ENCODE measurements at regions of chr12 and their contacts with region 1.

Region 1: DNA sequence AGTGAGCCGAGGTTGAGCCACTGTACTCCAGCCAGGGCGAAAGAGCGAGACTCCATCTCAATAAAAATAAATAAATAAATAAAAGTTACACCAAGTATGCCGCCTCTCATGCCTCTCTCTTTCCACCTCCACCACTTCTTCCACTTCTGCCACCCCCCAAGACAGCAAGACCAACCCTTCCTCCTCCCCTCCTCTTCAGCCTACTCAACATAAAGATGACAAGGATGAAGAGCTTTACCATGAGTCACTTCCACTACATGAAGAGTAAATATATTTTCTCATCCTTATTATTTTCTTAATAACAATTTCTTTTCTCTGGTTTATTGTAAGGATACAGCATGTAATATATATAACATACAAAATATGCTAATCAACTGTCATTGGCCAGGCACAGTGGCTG is 3.6 kb upstream of the TMED2 start:
- DNase-seq: no peak
- H3K4me3 Mint-ChIP-seq: no peak overlapping the region
- H3K27ac Mint-ChIP-seq: no peak overlapping the region
- H3K4me1 Mint-ChIP-seq: peaks cover 24% of the 10 kb centered on the region
- H3K27me3 Mint-ChIP-seq: no peaks in the 10 kb centered on the region

Region 2: DNA sequence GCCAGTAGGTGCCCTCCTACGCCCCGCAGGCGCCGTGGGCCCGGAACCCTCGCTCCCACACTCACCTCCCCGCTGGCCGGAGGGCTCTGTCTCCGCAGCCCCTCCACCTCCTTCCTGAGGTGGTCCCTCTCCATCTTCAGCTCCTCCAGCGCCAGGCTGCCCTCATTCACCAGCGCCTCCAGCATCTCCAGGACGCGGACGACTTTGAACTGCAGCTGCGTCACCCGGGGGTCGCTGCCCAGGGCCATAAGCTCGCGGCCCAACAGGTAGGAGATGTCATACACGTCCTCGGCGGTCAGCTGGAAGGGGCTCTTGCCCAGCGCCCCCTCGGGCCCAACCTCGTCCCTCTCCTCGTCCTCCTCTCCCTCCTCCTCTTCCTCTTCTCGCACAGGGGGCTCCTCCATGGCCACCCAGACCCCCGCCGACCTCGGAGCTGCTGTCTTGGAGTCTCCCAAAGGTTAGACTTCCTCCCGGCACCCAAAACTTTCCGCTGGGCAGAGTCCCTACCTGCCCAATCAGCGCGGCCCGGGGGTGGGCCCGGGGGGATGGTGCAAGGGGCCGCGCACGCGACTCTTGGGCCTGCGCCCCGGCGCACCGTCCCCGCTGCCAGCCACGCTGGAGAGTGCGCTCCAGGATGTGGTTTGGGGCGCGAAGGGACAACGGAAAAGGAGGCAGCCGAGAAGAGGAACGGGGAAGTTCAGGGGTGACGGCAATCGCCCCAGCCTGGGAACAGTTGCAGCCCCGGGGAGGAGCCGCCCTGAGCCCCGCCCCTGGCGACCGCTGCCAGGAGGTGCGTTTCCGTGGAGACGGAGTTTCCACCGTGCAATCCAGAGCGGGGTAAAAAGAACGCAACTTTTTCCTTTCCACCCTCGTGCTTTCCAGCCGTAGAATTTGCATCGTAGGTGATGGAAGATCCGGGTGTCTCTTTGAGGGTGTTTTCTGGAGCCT is 144.5 kb before region 1 on chr12 and contains the start of gene RILPL2:
- CTCF ChIA-PET with region 1: no interaction called
- POLR2A ChIA-PET with region 1: interaction called, 14 read pairs
- DNase-seq: peak; percentile 93
- H3K4me3 Mint-ChIP-seq: peak within 1 kb of the TSS; percentile 97
- H3K27ac Mint-ChIP-seq: peak within 1 kb of the TSS; percentile 96
- H3K4me1 Mint-ChIP-seq: peaks cover 49% of the 10 kb centered on the region
- H3K27me3 Mint-ChIP-seq: no peaks in the 10 kb centered on the region
- total RNA-seq, gene RILPL2: 8.9 to 9.0 TPM

Region 3: GRCh38 chr12:123670882-123671728 is 90.3 kb after region 1 on chr12 and contains the start of gene TCTN2:
- CTCF ChIA-PET with region 1: no interaction called
- POLR2A ChIA-PET with region 1: no interaction called
- DNase-seq: peak; percentile 96
- H3K4me3 Mint-ChIP-seq: peak within 1 kb of the TSS; percentile 79
- H3K27ac Mint-ChIP-seq: peak within 1 kb of the TSS; percentile 21
- H3K4me1 Mint-ChIP-seq: peaks cover 16% of the 10 kb centered on the region
- H3K27me3 Mint-ChIP-seq: no peaks in the 10 kb centered on the region
- total RNA-seq, gene TCTN2: 3.2 to 3.6 TPM

Region 4: DNA sequence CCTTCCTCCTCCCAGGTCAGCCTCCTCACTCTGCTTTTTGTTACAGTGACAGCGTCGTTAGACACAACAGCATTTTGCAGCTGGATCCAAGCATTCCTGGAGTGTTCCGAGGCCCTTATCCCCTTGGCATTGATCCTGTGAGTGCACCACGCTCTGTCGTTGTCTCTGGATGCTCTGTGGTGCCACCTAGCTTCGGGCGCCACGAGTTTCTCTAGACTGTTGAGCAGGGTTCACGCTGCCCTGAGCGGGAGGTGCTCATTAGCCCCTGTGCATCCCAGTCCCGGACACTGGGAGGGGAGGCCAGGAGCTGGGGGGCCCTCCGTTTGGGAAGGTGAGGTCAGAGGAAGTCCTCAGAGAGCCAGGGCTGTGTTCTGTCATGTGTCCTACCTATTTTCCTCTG is 164.1 kb after region 1 on chr12:
- CTCF ChIA-PET with region 1: no interaction called
- POLR2A ChIA-PET with region 1: no interaction called
- DNase-seq: no peak
- H3K4me3 Mint-ChIP-seq: no peak overlapping the region
- H3K27ac Mint-ChIP-seq: no peak overlapping the region
- H3K4me1 Mint-ChIP-seq: peaks cover 14% of the 10 kb centered on the region
- H3K27me3 Mint-ChIP-seq: no peaks in the 10 kb centered on the region

Measured in activated CD4-positive, alpha-beta memory T cell treated with anti-CD3 and anti-CD28 coated beads, Interleukin-2, amount 10 ng/mL, durations not matched to agents 7 days and 5 days (primary cell).